ENCODE measurements at regions of chr7 and their contacts with region 1.

Region 1: DNA sequence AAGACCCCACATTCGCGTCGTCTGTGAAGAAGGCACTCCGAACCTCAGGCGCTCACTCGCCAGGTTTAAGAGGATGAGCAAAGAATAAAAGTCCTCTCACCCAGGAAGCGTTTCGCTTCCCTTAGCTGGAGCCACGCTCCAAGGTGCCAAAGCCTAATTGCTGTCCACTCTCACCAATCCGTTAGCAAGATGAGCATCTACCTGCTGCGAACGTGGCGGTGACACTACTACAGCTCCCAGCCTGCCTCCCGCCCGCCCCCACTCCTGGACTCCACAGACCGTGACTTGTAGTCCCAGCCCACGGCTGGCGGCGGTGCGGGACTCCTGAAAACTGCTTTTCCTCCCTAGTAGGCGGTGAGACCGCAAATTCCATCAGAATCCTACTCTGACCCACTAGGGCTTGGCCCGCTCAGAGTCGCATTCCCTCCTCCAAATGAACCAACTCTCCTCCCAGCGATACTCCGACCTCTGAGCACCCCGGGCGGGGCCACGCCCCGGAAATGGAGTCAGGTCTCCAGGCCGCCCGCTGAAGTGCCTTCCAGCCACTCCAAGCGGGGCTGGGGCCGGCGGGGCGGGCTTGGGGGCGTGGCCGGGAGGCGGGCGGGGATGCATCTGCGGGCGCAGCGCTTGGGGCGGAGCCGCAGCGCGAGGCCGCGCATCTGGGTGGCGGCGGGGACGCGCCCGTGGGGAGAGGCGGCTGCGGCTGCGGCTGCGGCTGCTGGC is 521 bp upstream of the PTPN12 start:
- DNase-seq: peak; percentile 98
- H3K4me3 ChIP-seq: peak overlapping the region; percentile 86 to 98 (median 98)
- H3K27ac ChIP-seq: peak overlapping the region; percentile 91 to 100 (median 95)
- H3K4me1 ChIP-seq: peaks cover 5 to 16% of the 10 kb centered on the region in 2 donors
- H3K27me3 ChIP-seq: no peaks in the 10 kb centered on the region
- CTCF ChIP-seq: peak in 1 of 6 experiments; percentile 27
- POLR2A ChIP-seq: peak; percentile 69 to 97

Region 2: DNA sequence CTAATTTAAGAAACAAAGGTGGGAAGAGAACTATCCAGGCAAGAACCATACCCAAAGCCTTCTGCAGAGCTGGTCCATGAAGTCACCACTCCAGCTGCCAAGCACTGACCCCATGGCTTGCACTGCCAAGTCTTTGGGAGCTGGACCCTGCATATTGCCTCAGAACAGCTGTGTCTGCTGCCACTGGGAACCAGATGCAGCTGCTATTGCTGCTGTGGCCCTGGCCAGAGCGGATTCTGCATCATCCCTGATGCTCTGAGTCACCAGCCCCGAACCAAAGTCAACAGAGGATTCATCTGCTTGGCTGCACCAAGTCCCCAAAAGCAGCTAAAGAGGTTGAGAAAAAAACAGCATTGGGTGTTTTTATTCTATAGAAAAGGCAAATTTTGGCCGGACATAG is 81.2 kb before region 1 on chr7:
- intact Hi-C with region 1: loop called (anchors 10 kb)
- DNase-seq: no peak
- H3K4me3 ChIP-seq: no peak overlapping the region
- H3K27ac ChIP-seq: no peak overlapping the region
- H3K4me1 ChIP-seq: peaks cover 0 to 4% of the 10 kb centered on the region in 2 donors
- H3K27me3 ChIP-seq: no peaks in the 10 kb centered on the region
- CTCF ChIP-seq: no peak
- POLR2A ChIP-seq: no peak

Region 3: DNA sequence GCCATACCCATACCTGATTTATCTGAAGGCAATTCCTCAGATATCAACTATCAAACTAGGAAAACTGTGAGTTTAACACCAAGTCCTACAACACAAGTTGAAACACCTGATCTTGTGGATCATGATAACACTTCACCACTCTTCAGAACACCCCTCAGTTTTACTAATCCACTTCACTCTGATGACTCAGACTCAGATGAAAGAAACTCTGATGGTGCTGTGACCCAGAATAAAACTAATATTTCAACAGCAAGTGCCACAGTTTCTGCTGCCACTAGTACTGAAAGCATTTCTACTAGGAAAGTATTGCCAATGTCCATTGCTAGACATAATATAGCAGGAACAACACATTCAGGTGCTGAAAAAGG is 90.7 kb after region 1 on chr7:
- intact Hi-C with region 1: no loop called
- DNase-seq: no peak
- H3K4me3 ChIP-seq: no peak overlapping the region
- H3K27ac ChIP-seq: peak overlapping the region in 2 of 3 donors; percentile 37 to 48
- H3K4me1 ChIP-seq: peaks cover 0 to 6% of the 10 kb centered on the region in 2 donors
- H3K27me3 ChIP-seq: no peaks in the 10 kb centered on the region
- CTCF ChIP-seq: peak in 1 of 6 experiments; percentile 11
- POLR2A ChIP-seq: no peak

Measured in thyroid gland (tissue), 4 donors.